GM12878 (cell line): ENCODE measurements at regions of chr1 and their contacts with region 1.

Region 1: GRCh38 chr1:180881806-180882509 is 30.7 kb upstream of the KIAA1614 start:
- DNase-seq: no peak
- ATAC-seq: peak; percentile 92
- H3K4me3 ChIP-seq: no peak overlapping the region
- H3K27ac ChIP-seq: no peak overlapping the region
- H3K4me1 ChIP-seq: no peaks in the 10 kb centered on the region
- H3K27me3 ChIP-seq: no peaks in the 10 kb centered on the region
- CTCF ChIP-seq: peak; percentile 38 to 66 (median 49); a peak in 5 of 6 replicates
- EP300 ChIP-seq: no peak
- POLR2A ChIP-seq: no peak
- RAD21 ChIP-seq: peak; percentile 80

Region 2: DNA sequence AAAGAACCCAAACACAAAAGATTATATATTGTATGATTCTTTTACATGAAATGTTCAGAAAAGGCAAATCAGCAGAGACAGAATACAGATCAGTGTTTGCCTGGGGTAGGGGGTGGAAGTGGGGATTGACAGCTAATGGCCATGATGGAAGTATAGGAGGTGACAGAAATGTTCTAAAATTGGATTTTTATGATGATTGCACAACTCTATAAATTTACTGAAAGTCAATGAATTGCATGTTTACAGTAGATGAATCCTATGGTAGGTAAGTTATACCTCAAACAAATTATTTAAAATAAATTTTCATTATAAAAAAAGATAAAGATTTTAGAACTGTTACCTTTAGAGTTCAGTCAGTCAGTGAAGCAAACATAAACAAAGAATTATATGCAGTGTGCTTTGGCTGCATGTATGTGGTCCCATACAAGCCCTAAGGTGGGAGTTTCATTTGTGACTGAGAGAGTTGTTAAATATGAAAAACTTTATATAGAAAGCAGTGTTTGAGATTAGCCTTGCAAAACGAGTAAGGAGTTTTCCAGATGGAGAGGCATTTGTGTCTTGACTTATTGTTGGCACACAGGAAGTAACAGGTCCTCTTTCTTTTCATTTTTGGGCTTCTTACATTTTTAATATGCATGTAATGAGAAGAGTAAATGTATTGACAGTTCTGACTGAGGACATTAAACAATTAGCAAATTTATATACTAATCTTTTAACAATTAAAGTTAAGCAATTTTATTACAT is 84.9 kb before region 1 on chr1:
- CTCF ChIA-PET with region 1: no interaction called
- POLR2A ChIA-PET with region 1: no interaction called
- RAD21 ChIA-PET with region 1: no interaction called
- SMC1A ChIA-PET with region 1: no interaction called
- in situ Hi-C with region 1: no loop called
- intact Hi-C with region 1: no loop called
- DNase-seq: no peak
- ATAC-seq: no peak
- H3K4me3 ChIP-seq: no peak overlapping the region
- H3K27ac ChIP-seq: no peak overlapping the region
- H3K4me1 ChIP-seq: no peaks in the 10 kb centered on the region
- H3K27me3 ChIP-seq: no peaks in the 10 kb centered on the region
- CTCF ChIP-seq: no peak
- EP300 ChIP-seq: no peak
- POLR2A ChIP-seq: no peak
- RAD21 ChIP-seq: no peak

Region 3: DNA sequence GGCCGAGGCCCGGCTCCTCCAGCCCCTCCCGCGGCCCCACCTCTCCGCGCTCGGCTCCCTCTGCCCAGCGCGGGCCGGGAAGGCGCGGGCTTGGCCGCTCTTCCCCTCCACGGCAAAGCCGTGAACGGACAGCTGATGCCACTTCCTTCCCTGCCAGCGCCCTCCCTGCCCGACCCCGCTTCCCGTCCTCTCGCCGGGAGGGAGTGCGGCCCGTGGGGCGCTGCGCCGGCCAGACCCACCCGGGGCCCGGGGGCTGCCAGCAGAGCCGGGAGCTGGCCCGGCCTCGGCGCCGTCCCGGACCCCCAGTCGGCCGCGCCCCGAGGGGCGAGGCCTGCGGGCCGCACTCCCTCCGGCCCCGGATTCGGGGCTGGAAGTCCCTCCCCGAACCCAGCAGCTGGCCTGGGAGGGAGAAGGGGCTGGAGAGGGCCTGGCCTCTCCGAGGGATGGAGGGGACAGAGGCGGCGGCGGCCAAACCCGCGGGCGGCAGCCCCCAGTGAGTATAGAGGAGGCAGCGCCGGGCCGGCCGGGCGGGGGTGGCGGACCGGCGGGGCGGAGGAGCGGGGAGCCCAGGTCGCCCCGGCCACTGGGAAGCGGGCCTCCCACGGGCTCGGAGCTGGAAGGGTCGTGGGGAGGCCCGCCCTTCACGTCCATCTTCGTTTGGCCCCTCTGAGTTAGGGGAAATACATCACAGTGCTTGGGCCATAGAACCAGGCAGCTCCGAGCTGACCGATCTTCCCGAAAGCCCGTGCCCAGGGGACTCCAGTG is 31.0 kb after region 1 on chr1 and contains the start of gene KIAA1614:
- CTCF ChIA-PET with region 1: interaction called, 344 read pairs
- POLR2A ChIA-PET with region 1: interaction called, 3 read pairs
- RAD21 ChIA-PET with region 1: interaction called, 215 read pairs
- SMC1A ChIA-PET with region 1: interaction called, 304 read pairs
- in situ Hi-C with region 1: no loop called
- intact Hi-C with region 1: no loop called
- DNase-seq: no peak
- ATAC-seq: peak; percentile 45
- H3K4me3 ChIP-seq: peak within 1 kb of the TSS; percentile 61
- H3K27ac ChIP-seq: no peak within 1 kb of the TSS
- H3K4me1 ChIP-seq: peaks cover 22% of the 10 kb centered on the region
- H3K27me3 ChIP-seq: peaks cover 0 to 3% of the 10 kb centered on the region in 2 experiments; a peak in 1 of 4 replicates
- CTCF ChIP-seq: no peak
- EP300 ChIP-seq: no peak
- POLR2A ChIP-seq: no peak
- RAD21 ChIP-seq: no peak
- polyA plus RNA-seq, gene KIAA1614: 0.03 TPM in 1 of 2 experiments, not detected in the other

Region 4: DNA sequence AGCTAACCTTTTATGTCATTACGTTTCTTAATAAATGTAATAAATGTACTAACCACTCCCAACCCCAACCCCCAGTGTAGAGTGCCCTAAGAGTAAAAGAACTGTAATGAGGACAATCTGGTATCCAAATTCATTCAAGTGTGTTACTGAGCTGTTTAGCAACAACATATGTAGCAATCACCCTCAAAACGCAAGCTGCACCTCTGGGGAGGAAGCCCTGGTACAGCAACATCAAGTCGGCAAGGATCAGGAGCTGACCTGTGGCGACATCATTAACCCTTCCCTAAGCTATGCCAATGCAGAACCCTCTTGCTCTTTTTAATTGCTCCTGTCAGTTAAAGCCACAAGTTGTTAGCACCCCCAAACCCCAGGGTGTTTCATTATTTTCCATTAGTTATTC is 93.6 kb after region 1 on chr1:
- CTCF ChIA-PET with region 1: interaction called, 36 read pairs
- POLR2A ChIA-PET with region 1: no interaction called
- RAD21 ChIA-PET with region 1: interaction called, 6 read pairs
- SMC1A ChIA-PET with region 1: interaction called, 72 read pairs
- in situ Hi-C with region 1: no loop called
- intact Hi-C with region 1: loop called (anchors 2 kb)
- DNase-seq: no peak
- ATAC-seq: no peak
- H3K4me3 ChIP-seq: no peak overlapping the region
- H3K27ac ChIP-seq: no peak overlapping the region
- H3K4me1 ChIP-seq: no peaks in the 10 kb centered on the region
- H3K27me3 ChIP-seq: no peaks in the 10 kb centered on the region
- CTCF ChIP-seq: no peak
- EP300 ChIP-seq: no peak
- POLR2A ChIP-seq: no peak
- RAD21 ChIP-seq: no peak

Region 5: DNA sequence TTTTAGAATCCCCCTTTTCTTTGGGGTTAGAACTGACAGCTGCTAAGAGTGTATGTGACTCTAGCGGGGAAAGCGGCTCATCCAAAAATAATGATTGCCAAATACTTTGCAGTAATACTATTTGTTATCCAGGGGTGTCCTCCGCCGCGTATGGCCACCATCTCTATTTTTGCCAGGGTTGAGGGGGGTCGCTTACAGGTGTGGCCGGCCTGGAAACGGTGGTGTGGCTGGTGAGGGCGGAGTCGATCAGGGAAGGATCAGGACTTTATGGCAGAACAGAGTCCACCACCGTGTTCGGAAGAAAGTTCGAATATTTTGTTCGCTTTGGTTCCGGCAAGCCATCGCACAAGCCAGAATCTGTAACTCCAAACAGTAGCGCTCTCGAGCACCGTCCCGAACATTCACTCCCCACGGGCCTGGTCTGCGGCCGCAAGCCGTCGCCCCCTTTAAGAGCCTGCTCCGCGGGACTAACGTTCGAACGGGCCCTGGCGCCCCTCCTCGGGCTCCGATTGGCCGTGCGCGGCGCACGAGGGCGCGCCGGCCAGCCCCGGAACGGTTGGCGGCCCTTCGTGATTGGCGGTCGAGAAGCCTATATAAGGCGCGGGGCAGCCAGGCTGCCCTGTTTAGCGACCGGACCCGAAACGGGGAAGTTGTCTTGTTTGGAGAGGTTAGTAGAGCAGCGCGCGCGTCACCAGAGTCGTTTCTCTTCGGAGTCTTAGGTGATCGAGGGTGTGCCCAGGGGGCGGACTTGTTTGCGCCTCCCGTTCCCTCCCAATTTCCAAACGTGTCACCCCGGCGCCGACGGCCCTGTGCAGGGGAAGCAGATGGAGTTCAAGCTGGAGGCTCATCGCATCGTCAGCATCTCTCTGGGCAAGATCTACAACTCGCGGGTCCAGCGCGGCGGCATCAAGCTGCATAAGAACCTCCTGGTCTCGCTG is 206.4 kb after region 1 on chr1 and contains the start of gene IER5:
- CTCF ChIA-PET with region 1: interaction called, 10 read pairs
- POLR2A ChIA-PET with region 1: interaction called, 4 read pairs
- RAD21 ChIA-PET with region 1: interaction called, 29 read pairs
- SMC1A ChIA-PET with region 1: interaction called, 14 read pairs
- in situ Hi-C with region 1: no loop called
- intact Hi-C with region 1: loop called (anchors 5 kb)
- DNase-seq: peak; percentile 83
- ATAC-seq: peak; percentile 82
- H3K4me3 ChIP-seq: peak within 1 kb of the TSS; percentile 99
- H3K27ac ChIP-seq: peak within 1 kb of the TSS; percentile 97
- H3K4me1 ChIP-seq: peaks cover 13% of the 10 kb centered on the region; the same call in 1 of the 2 replicates
- H3K27me3 ChIP-seq: no peaks in the 10 kb centered on the region
- CTCF ChIP-seq: 0 out of 6 replicates have a peak, but pooled peaks of 1 of the 3 experiments have one; percentile 0
- EP300 ChIP-seq: 0 out of 4 replicates have a peak, but pooled peaks of 1 of the 2 experiments have one; percentile 15
- POLR2A ChIP-seq: peak; percentile 98
- RAD21 ChIP-seq: no peak
- polyA plus RNA-seq, gene IER5: 6.2 to 19.5 TPM

Region 6: GRCh38 chr1:181166377-181167196 is 284.6 kb after region 1 on chr1:
- CTCF ChIA-PET with region 1: interaction called, 59 read pairs
- POLR2A ChIA-PET with region 1: interaction called, 4 read pairs
- RAD21 ChIA-PET with region 1: interaction called, 28 read pairs
- SMC1A ChIA-PET with region 1: interaction called, 28 read pairs
- in situ Hi-C with region 1: loop called (anchors 5 kb)
- intact Hi-C with region 1: loop called (anchors 1 kb)
- DNase-seq: no peak
- ATAC-seq: peak; percentile 100
- H3K4me3 ChIP-seq: no peak overlapping the region
- H3K27ac ChIP-seq: no peak overlapping the region
- H3K4me1 ChIP-seq: no peaks in the 10 kb centered on the region
- H3K27me3 ChIP-seq: no peaks in the 10 kb centered on the region
- CTCF ChIP-seq: peak; percentile 83 to 88 (median 84)
- EP300 ChIP-seq: no peak
- POLR2A ChIP-seq: no peak
- RAD21 ChIP-seq: peak; percentile 94